Dendritic cell treated with granulocyte-macrophage colony-stimulating factor and Interleukin-4, amounts not matched to agents 40 ng/mL and 50 ng/mL, for 4 days (primary cell): ENCODE measurements at regions of chr2 and their contacts with region 1.

Region 1: GRCh38 chr2:217993817-217994463 is 8.9 kb downstream of the TNS1 start:
- H3K4me3 Mint-ChIP-seq: no peak overlapping the region
- H3K27ac Mint-ChIP-seq: no peak overlapping the region
- H3K4me1 Mint-ChIP-seq: peaks cover 31% of the 10 kb centered on the region
- H3K27me3 Mint-ChIP-seq: peaks cover 1% of the 10 kb centered on the region

Region 2: GRCh38 chr2:217766356-217766755 is 227.6 kb before region 1 on chr2:
- intact Hi-C with region 1: no loop called
- H3K4me3 Mint-ChIP-seq: no peak overlapping the region
- H3K27ac Mint-ChIP-seq: no peak overlapping the region
- H3K4me1 Mint-ChIP-seq: no peaks in the 10 kb centered on the region
- H3K27me3 Mint-ChIP-seq: peaks cover 16% of the 10 kb centered on the region

Region 3: DNA sequence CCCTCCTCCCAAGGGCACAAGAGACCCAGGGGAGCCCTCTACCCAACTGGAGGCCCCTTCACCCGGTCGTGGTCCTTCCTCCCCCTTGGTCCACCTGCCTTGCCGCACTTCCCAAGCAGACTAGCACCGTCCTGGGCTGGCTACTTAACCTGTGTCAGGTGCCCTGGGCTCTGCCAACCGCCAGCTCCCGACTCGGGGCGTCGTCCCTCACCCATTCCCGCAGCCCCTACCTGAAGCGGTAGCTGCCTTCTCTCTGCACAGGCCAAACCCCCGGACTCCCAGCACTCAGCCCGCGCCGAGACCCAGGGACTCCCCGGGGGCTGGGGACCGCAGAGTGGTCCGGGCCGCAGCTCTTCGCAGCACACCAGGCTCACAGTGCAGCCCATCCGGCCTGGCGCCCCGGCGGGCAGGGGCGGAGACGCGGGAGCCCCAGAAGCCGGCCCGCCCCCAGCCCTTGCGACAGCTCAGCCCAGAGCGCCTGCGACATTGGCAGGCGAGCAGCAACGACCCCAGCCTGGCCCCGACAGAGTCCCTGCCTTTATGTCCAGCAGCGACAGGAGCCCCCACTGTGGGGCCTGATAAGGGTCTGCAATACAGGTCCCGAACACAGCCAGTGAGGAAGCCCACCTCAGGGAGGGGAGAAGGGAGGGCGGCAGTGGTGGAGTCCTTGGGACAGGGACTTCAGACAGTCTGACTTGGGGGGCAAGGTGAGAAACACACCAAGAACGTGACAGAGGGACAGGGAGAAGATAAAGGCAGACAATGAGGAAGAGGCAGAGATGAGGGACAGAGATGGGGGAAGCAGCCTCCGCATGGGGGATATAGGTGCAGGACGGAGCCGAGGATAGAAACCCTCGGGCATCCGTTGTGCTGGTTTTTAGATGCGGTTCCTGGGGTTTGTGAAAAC is 39.9 kb after region 1 on chr2:
- intact Hi-C with region 1: loop called (anchors 5 kb)
- H3K4me3 Mint-ChIP-seq: peak overlapping the region; percentile 75
- H3K27ac Mint-ChIP-seq: peak overlapping the region; percentile 83
- H3K4me1 Mint-ChIP-seq: peaks cover 44% of the 10 kb centered on the region
- H3K27me3 Mint-ChIP-seq: peaks cover 9% of the 10 kb centered on the region

Region 4: DNA sequence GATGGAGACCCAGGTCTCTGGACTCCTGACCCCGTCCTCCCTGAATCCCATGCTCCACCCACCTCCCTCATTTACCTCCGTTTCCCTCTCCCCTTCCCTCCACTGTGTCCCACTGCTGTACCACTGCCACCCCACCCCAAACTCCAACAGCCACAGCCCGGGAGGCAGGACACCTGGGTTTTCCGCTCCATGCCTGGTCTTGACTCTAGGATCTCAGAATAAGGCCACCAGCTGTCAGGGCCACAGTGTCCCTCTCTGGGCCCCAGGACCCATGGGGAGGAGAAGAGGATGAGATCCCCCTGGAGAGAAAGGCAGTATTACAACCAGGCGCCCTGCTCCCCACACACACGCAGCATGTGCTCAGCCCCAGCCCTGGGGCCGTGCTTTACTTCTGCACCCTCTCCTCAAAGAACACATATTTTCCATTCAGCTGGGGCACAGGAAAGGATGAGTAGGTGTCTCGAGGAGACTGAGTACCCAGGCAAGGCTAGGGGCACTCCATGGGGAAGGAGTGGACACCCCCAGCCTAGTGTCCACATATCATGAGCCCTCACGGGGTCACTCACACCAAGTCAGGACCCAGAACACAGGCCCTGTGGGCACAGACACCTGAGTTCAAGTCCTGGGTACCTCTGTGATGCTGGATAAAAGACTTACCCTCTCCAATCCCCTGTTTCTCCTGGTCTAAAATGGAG is 75.8 kb after region 1 on chr2:
- intact Hi-C with region 1: loop called (anchors 2 kb)
- H3K4me3 Mint-ChIP-seq: peak overlapping the region; percentile 78
- H3K27ac Mint-ChIP-seq: peak overlapping the region; percentile 93
- H3K4me1 Mint-ChIP-seq: peaks cover 95% of the 10 kb centered on the region
- H3K27me3 Mint-ChIP-seq: no peaks in the 10 kb centered on the region